ENCODE measurements at regions of chr19 and their contacts with region 1.

Region 1: DNA sequence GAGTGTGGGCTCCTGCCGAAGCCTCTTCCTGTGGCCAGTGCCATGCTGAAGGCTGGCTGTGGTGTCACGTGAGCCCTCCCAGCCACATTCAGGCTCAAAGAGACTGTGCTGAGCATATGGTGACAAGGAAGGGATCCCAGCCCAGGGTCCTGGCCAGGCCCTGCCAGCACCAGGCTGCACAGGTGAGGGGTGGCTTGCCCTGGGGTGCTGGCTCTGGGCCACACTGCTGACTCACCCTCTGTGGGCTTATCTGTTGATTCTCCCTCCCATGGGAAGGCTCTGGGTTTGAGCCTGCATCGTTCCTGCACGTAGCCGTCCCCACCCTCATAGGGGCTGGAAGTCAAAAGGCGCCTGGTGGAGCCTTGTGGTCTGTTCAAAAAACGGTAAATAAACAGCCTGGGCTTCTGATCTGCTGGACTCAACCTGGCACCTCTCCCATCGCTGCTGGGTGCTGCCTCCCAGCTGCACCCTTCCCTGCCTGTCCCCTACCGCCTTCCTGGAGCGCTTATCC is 31.1 kb downstream of the DNM2 start:
- DNase-seq: peak; percentile 96 to 98
- H3K4me3 ChIP-seq: peak overlapping the region; percentile 29; the same call in 1 of the 2 replicates
- H3K27ac ChIP-seq: peak overlapping the region; percentile 83
- H3K4me1 ChIP-seq: peaks cover 48% of the 10 kb centered on the region
- H3K27me3 ChIP-seq: no peaks in the 10 kb centered on the region
- CTCF ChIP-seq: no peak

Region 2: GRCh38 chr19:10259162-10259905 is 489.6 kb before region 1 on chr19:
- CTCF ChIA-PET with region 1: no interaction called
- POLR2A ChIA-PET with region 1: interaction called, 10 read pairs
- intact Hi-C with region 1: no loop called
- DNase-seq: peak; percentile 83 to 86
- H3K4me3 ChIP-seq: no peak overlapping the region
- H3K27ac ChIP-seq: 0 out of 2 replicates have a peak overlapping the region, but pooled peaks have one; percentile 5
- H3K4me1 ChIP-seq: peaks cover 18% of the 10 kb centered on the region
- H3K27me3 ChIP-seq: no peaks in the 10 kb centered on the region
- CTCF ChIP-seq: peak; percentile 89

Region 3: GRCh38 chr19:10305139-10305806 is 443.7 kb before region 1 on chr19:
- CTCF ChIA-PET with region 1: no interaction called
- POLR2A ChIA-PET with region 1: no interaction called
- intact Hi-C with region 1: no loop called
- DNase-seq: no peak
- H3K4me3 ChIP-seq: no peak overlapping the region
- H3K27ac ChIP-seq: no peak overlapping the region
- H3K4me1 ChIP-seq: no peaks in the 10 kb centered on the region
- H3K27me3 ChIP-seq: no peaks in the 10 kb centered on the region
- CTCF ChIP-seq: no peak

Region 4: DNA sequence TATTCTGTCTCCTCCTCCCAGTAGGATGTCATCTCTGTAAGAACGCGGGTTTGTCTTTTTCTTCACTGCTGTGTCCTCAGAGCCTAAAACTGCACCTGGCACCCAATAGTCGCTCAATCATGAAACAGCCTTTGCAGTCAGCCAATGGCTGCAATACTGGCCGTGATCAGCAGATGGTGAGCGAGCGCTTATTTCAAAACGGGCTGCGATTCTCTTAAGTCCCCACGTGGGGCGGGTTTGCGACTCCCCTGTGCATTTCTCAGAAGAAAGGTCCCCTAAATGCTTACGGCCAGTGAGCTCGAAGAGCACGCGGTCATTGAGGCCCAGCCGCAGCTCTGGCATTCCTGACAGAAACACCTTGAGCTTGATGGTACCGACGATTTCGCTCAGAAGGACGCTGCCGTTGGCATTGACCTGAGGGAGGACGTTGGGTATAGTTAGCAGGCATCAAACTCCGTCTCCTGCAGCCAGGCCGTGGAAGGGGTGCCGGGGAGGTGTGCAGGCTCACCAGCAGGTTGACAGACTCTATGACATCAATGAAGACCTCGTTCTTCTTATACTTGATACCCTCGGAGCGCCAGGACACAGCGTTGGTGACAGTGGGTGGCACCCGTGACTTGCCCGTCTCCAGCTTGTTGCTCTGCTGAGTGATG is 167.9 kb before region 1 on chr19:
- CTCF ChIA-PET with region 1: no interaction called
- POLR2A ChIA-PET with region 1: interaction called, 33 read pairs
- intact Hi-C with region 1: no loop called
- DNase-seq: peak; percentile 82 to 89
- H3K4me3 ChIP-seq: no peak overlapping the region
- H3K27ac ChIP-seq: no peak overlapping the region
- H3K4me1 ChIP-seq: peaks cover 8% of the 10 kb centered on the region; the same call in 1 of the 2 replicates
- H3K27me3 ChIP-seq: no peaks in the 10 kb centered on the region
- CTCF ChIP-seq: peak; percentile 99

Region 5: DNA sequence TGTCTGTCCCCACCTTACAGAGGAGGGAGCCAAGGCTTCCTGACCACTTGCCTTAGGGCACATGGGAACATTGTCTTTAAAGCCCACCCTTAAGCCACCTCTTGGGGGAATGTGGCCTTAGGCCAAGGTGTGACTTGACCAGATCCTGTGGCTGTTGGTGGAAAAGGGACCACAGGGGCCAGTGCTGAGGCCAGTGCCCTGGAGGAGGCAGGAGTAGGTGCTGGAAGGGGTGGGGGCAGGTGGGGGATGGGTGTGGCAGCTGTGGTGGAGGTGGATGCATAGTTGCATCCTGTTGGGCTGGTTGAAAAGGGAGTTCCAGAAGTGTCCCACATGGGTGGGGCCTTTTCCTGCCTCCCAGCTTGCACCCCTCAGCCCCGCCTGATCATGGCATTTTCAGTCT is 13.7 kb after region 1 on chr19:
- CTCF ChIA-PET with region 1: no interaction called
- POLR2A ChIA-PET with region 1: no interaction called
- intact Hi-C with region 1: loop called (anchors 1 kb)
- DNase-seq: peak; percentile 48 to 84
- H3K4me3 ChIP-seq: no peak overlapping the region
- H3K27ac ChIP-seq: peak overlapping the region; percentile 45; the same call in 1 of the 2 replicates
- H3K4me1 ChIP-seq: peaks cover 47% of the 10 kb centered on the region
- H3K27me3 ChIP-seq: no peaks in the 10 kb centered on the region
- CTCF ChIP-seq: no peak

Region 6: DNA sequence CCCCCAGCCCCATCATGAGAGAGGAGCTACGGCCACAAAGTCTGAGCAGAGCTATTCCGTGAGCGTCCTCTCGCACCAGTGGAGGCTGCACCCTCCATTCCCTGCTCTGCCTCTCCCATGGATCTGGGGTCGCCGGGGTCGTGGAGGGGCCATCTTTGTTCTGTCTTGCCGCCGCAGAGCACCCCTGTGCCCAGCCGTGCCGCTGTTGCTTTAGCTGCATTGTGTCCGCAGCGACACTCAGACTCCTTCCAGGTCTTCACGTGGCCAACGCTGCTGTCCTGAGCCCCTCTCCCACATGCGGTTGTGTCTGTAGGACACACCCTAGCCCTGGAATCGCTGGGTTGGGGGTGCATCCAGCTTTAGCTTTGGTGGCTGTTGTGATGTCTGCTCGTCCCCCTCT is 163.6 kb after region 1 on chr19:
- CTCF ChIA-PET with region 1: no interaction called
- POLR2A ChIA-PET with region 1: interaction called, 21 read pairs
- intact Hi-C with region 1: no loop called
- DNase-seq: no peak
- H3K4me3 ChIP-seq: no peak overlapping the region
- H3K27ac ChIP-seq: no peak overlapping the region
- H3K4me1 ChIP-seq: peaks cover 12% of the 10 kb centered on the region; the same call in 1 of the 2 replicates
- H3K27me3 ChIP-seq: no peaks in the 10 kb centered on the region
- CTCF ChIP-seq: no peak

Measured in PC-9 (cell line).